Activated T-helper 1 cell treated with anti-CD3 and anti-CD28 coated beads, Interleukin-12 subunit alpha, Interleukin-12 subunit beta, Interleukin-2, Interleukin-4 antibody, amounts not matched to agents 30 ng/mL and 10 ng/mL and 1 ng/mL, durations not matched to agents 14 hours and 24 hours and 36 hours (primary cell): ENCODE measurements at regions of chr1 and their contacts with region 1.

Region 1: GRCh38 chr1:86965012-86965826 is 50.8 kb downstream of the HS2ST1 start:
- DNase-seq: no peak
- H3K4me3 Mint-ChIP-seq: no peak overlapping the region
- H3K27ac Mint-ChIP-seq: no peak overlapping the region
- H3K4me1 Mint-ChIP-seq: no peaks in the 10 kb centered on the region
- H3K27me3 Mint-ChIP-seq: no peaks in the 10 kb centered on the region

Region 2: GRCh38 chr1:87084244-87084836 is 119.1 kb after region 1 on chr1:
- intact Hi-C with region 1: loop called (anchors 1 kb)
- DNase-seq: no peak
- H3K4me3 Mint-ChIP-seq: no peak overlapping the region
- H3K27ac Mint-ChIP-seq: no peak overlapping the region
- H3K4me1 Mint-ChIP-seq: peaks cover 5% of the 10 kb centered on the region
- H3K27me3 Mint-ChIP-seq: no peaks in the 10 kb centered on the region